ENCODE measurements at regions of chr6 and their contacts with region 1.

Region 1: GRCh38 chr6:124090491-124090890 is 286.8 kb downstream of the NKAIN2 start:
- DNase-seq: no peak
- H3K4me3 ChIP-seq: no peak overlapping the region
- CTCF ChIP-seq: no peak

Region 2: GRCh38 chr6:124190256-124190655 is 99.8 kb after region 1 on chr6:
- in situ Hi-C with region 1: loop called (anchors 5 kb)
- DNase-seq: no peak
- H3K4me3 ChIP-seq: no peak overlapping the region
- CTCF ChIP-seq: no peak

Measured in astrocyte of the cerebellum (primary cell).